ENCODE measurements at regions of chr3 and their contacts with region 1.

Region 1: DNA sequence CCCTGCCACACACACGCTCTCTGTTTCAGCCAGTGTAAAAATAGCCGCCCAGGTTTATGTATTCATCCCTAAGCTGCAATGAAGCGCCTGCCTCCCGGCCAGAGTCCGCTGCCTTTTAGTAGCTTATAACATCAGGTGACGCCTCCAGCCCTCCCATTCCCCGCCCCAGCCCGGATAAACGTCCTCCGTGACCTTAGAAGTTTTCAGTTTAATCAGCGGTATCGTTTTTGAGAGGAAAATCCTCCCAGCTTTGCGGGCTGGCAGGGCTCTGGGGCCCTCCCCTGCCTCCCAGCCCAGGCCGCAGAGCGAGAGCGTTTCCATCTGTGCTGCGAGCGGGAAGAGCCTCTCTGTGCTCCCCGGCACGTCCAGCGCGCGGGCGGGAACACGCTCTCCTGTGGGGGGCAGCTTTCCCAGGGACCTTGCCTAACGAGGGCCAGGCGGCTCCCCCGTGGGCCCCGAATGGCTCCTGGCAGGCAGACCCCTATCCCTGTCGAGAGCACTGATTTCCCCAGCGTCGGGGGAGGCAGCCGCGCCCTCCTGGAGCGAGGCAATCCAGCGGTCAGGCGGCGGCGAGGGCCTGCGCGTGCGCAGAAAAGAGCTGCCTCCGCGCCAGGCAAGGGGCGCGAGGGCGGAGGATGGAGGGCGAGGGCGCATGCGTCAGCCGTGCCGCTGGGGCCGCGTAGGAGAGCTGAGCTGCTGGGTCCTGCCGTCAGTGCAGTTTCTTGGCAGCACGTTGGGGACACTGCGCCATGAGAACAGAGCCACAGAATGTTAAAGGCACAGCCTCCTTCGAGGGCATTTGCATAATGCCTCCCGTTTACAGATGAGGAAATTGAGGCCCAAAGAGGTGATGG is 71.1 kb downstream of the CCNL1 start:
- DNase-seq: peak; percentile 96 to 98
- ATAC-seq: peak; percentile 81 to 93 (median 90)
- H3K4me3 ChIP-seq: peak overlapping the region; percentile 47 to 71 (median 62)
- H3K27ac ChIP-seq: peak overlapping the region; percentile 96 to 100 (median 99)
- H3K4me1 ChIP-seq: peaks cover 3 to 80% (median 58%) of the 10 kb centered on the region in 9 donors
- H3K27me3 ChIP-seq: no peaks in the 10 kb centered on the region
- CTCF ChIP-seq: peak in 5 of 9 donors; percentile 11 to 44 (median 29)

Region 2: DNA sequence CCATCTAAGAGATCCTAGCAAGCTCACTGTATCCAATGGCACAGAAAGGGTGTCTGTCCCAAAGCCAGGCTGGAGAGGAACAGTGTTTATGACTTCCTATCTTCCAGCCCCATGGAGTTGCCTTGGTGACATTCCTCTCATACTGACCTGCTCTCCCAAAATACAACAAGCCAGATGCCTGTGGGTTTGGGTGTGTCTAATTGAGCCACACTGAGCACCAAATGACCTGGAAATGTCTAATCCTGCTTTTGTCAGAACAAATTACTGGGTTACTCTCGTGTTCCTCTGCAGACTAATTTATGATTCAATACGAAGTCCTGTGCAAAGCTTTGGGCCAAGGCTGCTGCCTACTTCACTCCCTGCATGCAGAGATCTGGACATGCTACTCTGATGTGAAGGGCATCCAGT is 1697.3 kb before region 1 on chr3:
- intact Hi-C with region 1: no loop called
- DNase-seq: peak in 1 of 2 donors; percentile 70
- ATAC-seq: peak; percentile 89 to 99 (median 94)
- H3K4me3 ChIP-seq: no peak overlapping the region
- H3K27ac ChIP-seq: peak overlapping the region in 9 of 10 donors; percentile 6 to 80 (median 50)
- H3K4me1 ChIP-seq: peaks cover 0 to 38% (median 10%) of the 10 kb centered on the region in 9 donors
- H3K27me3 ChIP-seq: no peaks in the 10 kb centered on the region
- CTCF ChIP-seq: no peak

Region 3: DNA sequence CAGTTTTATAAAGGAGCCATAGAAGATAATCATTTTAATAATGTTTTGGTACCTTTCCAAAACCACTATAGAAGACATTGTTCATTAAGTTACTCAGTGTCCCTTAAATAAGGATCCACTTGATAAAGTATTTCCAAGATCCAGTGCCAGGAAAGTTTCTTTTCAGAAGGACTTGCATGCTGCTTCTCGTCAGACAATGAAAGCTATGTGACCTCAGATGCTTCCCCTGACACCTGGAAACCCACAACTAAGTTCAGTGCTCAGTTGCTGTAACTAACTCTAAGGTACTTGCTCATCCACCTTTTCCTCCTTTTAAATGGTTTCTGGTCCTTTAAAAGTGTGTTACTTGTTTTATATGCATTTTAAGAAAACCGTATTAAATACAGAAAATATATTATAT is 541.2 kb before region 1 on chr3:
- intact Hi-C with region 1: loop called in 8 of 10 experiments (anchors 2 to 10 kb)
- DNase-seq: no peak
- ATAC-seq: peak in 6 of 8 donors; percentile 57 to 78 (median 65)
- H3K4me3 ChIP-seq: no peak overlapping the region
- H3K27ac ChIP-seq: peak overlapping the region in 9 of 10 donors; percentile 38 to 91 (median 59)
- H3K4me1 ChIP-seq: peaks cover 5 to 99% (median 81%) of the 10 kb centered on the region in 9 donors
- H3K27me3 ChIP-seq: no peaks in the 10 kb centered on the region
- CTCF ChIP-seq: no peak

Region 4: GRCh38 chr3:156674046-156674910 is 414.6 kb before region 1 on chr3 and contains the start of gene TIPARP:
- intact Hi-C with region 1: loop called in 9 of 10 experiments (anchors 2 to 5 kb)
- DNase-seq: peak; percentile 99 to 100
- ATAC-seq: peak; percentile 96 to 99 (median 97)
- H3K4me3 ChIP-seq: peak within 1 kb of the TSS; percentile 72 to 98 (median 92)
- H3K27ac ChIP-seq: peak within 1 kb of the TSS; percentile 93 to 98 (median 97)
- H3K4me1 ChIP-seq: peaks cover 0 to 52% (median 35%) of the 10 kb centered on the region in 9 donors
- H3K27me3 ChIP-seq: no peaks in the 10 kb centered on the region
- CTCF ChIP-seq: peak; percentile 50 to 85 (median 72)
- total RNA-seq, gene TIPARP: 19.8 to 74.6 (median 23.9) TPM

Region 5: DNA sequence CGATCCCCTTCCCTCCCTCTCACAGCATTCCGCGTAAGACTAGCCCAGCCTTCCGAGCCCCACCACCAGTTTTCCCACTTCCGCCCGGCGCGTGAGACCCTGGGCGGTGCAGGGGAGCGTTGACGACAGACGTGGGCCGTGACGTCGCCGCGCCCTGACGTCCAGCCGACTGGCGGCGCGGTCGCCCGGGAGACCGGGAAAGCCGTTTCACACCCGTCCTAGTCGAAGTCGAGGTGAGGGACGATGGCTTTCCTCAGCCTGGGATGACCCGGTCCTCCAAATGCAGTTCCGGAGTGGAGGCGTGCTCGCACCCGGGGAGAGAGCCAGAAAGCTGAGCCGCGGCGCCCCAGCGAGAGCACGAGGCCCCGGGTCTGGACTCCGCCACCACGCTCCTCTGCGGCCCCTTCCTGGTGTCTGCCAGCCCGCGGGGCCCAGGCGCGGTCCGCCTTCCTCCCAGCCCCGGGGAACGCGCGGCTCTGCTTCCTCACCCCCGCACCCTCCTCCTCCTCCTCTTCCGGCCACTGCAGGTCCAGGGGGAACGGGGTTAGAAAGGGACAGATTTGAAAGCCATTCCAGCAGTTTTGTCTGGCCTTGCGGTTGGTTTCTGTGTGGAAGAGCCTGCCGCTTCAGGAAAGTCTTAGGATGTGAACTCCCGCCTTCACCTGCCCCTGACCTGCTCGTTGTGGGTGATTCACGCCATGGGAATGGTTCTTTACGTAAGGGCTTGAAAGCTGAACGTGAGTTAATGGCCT is 262.5 kb before region 1 on chr3 and contains the start of gene LEKR1:
- intact Hi-C with region 1: loop called in 4 of 10 experiments (anchors 5 to 10 kb)
- DNase-seq: peak; percentile 89 to 90
- ATAC-seq: peak; percentile 95 to 98 (median 97)
- H3K4me3 ChIP-seq: peak within 1 kb of the TSS; percentile 50 to 80 (median 71)
- H3K27ac ChIP-seq: peak within 1 kb of the TSS; percentile 85 to 95 (median 92)
- H3K4me1 ChIP-seq: peaks cover 0 to 13% (median 8%) of the 10 kb centered on the region in 9 donors
- H3K27me3 ChIP-seq: no peaks in the 10 kb centered on the region
- CTCF ChIP-seq: no peak
- total RNA-seq, gene LEKR1: 0.17 to 3.0 (median 0.92) TPM

Region 6: GRCh38 chr3:157059181-157059580 is 29.6 kb before region 1 on chr3:
- intact Hi-C with region 1: no loop called
- DNase-seq: no peak
- ATAC-seq: no peak
- H3K4me3 ChIP-seq: no peak overlapping the region
- H3K27ac ChIP-seq: no peak overlapping the region
- H3K4me1 ChIP-seq: peaks cover 0 to 4% (median 0%) of the 10 kb centered on the region in 9 donors
- H3K27me3 ChIP-seq: peaks cover 0 to 3% (median 0%) of the 10 kb centered on the region in 7 donors
- CTCF ChIP-seq: no peak

Region 7: GRCh38 chr3:157115069-157116006 is 26.5 kb after region 1 on chr3:
- intact Hi-C with region 1: loop called in 1 of 10 experiments (anchors 1 kb)
- DNase-seq: peak in 1 of 2 donors; percentile 44
- ATAC-seq: peak; percentile 67 to 91 (median 86)
- H3K4me3 ChIP-seq: no peak overlapping the region
- H3K27ac ChIP-seq: peak overlapping the region; percentile 60 to 85 (median 74)
- H3K4me1 ChIP-seq: peaks cover 4 to 48% (median 17%) of the 10 kb centered on the region in 9 donors
- H3K27me3 ChIP-seq: no peaks in the 10 kb centered on the region
- CTCF ChIP-seq: no peak

Region 8: DNA sequence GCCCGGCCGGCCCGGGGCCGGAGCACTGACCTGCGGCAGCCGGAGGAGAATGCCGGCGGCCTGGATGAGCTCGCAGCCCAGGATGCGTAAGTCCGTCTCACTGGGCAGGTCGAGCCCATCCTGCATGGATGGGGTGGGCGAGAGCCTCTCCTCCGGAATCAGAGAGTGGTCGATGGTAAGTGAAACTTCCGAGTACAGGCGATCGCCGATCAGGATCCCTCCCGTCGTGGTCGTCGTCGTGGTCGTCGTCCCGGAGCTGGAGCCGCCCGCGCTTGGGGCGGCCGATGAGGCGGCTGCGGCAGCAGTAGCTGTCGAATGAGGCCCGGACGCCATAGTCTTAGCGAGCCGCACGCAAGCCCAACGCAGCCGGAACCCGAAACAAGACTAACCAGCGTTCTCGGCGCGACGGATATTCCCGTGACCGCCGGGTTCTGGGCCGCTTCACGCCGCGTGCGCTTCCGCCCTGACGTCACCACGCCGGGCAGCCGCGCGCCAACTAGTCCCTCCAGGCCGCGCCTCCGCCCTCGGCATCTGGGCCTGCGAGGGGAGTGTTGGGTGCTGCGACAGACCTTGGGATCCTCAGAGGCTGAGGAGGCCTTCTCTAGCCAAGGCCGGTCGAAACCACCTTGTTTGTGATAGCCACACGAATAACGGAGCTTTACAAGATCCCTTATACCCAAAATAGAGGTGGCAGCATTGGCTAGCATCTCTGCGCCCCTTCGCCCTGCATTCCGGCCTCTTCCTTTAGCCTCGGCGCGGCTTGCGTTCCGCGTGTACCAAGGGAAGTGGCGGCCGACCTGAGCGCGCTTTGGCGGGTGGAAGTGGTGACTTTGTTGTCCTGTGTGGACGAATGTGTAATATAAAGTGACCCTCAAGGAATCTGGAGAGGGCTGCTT is 71.2 kb after region 1 on chr3 and contains the start of gene CCNL1:
- intact Hi-C with region 1: loop called in 1 of 10 experiments (anchors 1 kb)
- DNase-seq: peak; percentile 97
- ATAC-seq: peak; percentile 93 to 97 (median 96)
- H3K4me3 ChIP-seq: peak within 1 kb of the TSS; percentile 87 to 100 (median 96)
- H3K27ac ChIP-seq: peak within 1 kb of the TSS; percentile 97 to 100 (median 100)
- H3K4me1 ChIP-seq: peaks cover 9 to 61% (median 51%) of the 10 kb centered on the region in 9 donors
- H3K27me3 ChIP-seq: no peaks in the 10 kb centered on the region
- CTCF ChIP-seq: no peak
- total RNA-seq, gene CCNL1: 19.1 to 52.5 (median 24.7) TPM

Measured in heart right ventricle (tissue), 16 donors.